Sigmoid colon (tissue), 7 donors: ENCODE measurements at regions of chr2 and their contacts with region 1.

Region 1: GRCh38 chr2:133674433-133675331 is 106.4 kb upstream of the NCKAP5 start:
- DNase-seq: peak; percentile 65
- H3K4me3 ChIP-seq: peak overlapping the region in 3 of 4 donors; percentile 23 to 34 (median 33)
- H3K27ac ChIP-seq: peak overlapping the region in 2 of 4 donors; percentile 38 to 50
- H3K4me1 ChIP-seq: peaks cover 0 to 26% (median 21%) of the 10 kb centered on the region in 4 donors
- H3K27me3 ChIP-seq: no peaks in the 10 kb centered on the region
- CTCF ChIP-seq: no peak
- EP300 ChIP-seq: no peak
- POLR2A ChIP-seq: no peak

Region 2: DNA sequence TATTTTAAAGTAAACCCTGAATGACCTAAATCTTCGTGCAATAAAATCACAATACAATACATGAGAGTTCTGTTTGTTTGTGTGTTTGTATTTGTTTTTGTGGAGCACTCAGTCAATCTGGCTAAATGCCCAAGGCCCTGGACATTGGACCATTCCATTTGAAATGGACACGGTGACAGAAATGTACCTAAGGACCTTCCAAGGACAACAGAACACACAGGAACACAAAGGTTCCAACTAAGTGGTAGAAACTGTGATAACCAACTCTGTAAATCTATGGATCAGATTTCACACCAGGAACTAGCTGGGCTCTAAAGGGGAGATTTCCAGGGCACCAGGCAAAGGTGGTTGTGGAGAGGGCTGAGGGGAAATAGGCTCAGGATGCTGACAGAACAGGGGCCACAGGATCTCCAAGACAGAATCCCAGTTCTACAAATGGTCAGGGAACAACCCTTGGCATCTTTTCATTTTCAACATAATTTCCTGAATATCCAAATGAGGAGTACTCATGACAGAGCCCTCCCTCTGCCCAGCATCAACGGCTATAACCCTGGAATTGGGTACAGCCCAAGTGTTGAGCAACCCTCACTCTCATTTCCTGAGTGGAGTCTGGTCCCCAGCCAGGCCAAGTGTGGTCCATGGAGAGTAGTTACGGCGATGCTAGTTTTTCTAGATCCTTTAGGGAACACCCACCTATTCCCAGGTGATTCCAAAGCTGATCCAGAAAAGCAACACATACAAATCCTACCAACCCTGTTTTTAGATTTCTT is 184.9 kb before region 1 on chr2:
- intact Hi-C with region 1: no loop called
- DNase-seq: peak; percentile 65
- H3K4me3 ChIP-seq: no peak overlapping the region
- H3K27ac ChIP-seq: no peak overlapping the region
- H3K4me1 ChIP-seq: no peaks in the 10 kb centered on the region
- H3K27me3 ChIP-seq: no peaks in the 10 kb centered on the region
- CTCF ChIP-seq: no peak
- EP300 ChIP-seq: no peak
- POLR2A ChIP-seq: no peak

Region 3: GRCh38 chr2:133765658-133766057 is 91.0 kb after region 1 on chr2:
- intact Hi-C with region 1: loop called (anchors 10 kb)
- DNase-seq: no peak
- H3K4me3 ChIP-seq: no peak overlapping the region
- H3K27ac ChIP-seq: no peak overlapping the region
- H3K4me1 ChIP-seq: peaks cover 0 to 21% (median 15%) of the 10 kb centered on the region in 4 donors
- H3K27me3 ChIP-seq: no peaks in the 10 kb centered on the region
- CTCF ChIP-seq: no peak
- EP300 ChIP-seq: no peak
- POLR2A ChIP-seq: no peak